PC-3 (cell line): ENCODE measurements at regions of chr10 and their contacts with region 1.

Region 1: DNA sequence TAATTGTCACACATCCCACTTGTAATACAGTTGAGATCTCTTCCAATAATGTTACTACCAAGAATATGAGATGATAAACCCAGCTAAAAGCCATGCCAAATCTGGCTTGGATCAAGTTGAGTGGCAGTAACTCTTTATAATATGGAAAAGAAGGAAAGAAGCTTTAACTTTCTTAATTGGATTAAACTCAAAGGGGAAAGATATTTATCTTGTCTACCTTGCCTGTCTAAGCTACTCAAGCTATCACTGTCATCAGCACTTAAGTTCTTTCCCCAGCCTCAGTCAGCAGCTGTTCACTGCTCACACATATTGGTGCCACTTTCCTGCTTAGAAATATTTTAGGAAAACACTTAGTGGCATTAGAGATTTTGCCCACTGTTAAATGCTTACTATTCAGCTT is 350.7 kb downstream of the IPMK start:
- DNase-seq: no peak
- ATAC-seq: no peak
- H3K4me3 ChIP-seq: no peak overlapping the region
- H3K27ac ChIP-seq: no peak overlapping the region
- H3K4me1 ChIP-seq: peaks cover 25% of the 10 kb centered on the region
- H3K27me3 ChIP-seq: no peaks in the 10 kb centered on the region
- CTCF ChIP-seq: no peak

Region 2: DNA sequence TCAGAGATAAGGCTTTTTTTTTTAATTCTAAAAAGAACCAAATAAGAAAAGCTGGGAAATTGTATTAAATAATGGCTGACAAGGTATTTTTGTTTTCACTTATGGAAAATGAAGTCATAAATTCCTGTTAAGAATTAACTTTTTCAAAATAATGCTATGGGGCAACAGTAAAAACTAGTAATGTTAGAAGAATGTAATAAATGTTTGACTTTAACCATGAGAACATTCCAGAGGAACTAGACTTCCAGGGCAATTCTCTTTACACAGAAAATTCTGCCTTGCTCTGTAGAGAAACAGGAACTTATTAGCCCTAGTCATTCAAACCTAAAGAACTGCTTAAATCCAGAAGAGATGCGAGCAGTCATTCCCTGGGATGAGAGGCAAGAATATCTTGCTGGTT is 220.4 kb before region 1 on chr10:
- CTCF ChIA-PET with region 1: no interaction called
- POLR2A ChIA-PET with region 1: no interaction called
- intact Hi-C with region 1: loop called (anchors 5 kb)
- DNase-seq: peak; percentile 94
- ATAC-seq: peak; percentile 96
- H3K4me3 ChIP-seq: no peak overlapping the region
- H3K27ac ChIP-seq: peak overlapping the region; percentile 63
- H3K4me1 ChIP-seq: peaks cover 35% of the 10 kb centered on the region
- H3K27me3 ChIP-seq: no peaks in the 10 kb centered on the region
- CTCF ChIP-seq: no peak

Region 3: DNA sequence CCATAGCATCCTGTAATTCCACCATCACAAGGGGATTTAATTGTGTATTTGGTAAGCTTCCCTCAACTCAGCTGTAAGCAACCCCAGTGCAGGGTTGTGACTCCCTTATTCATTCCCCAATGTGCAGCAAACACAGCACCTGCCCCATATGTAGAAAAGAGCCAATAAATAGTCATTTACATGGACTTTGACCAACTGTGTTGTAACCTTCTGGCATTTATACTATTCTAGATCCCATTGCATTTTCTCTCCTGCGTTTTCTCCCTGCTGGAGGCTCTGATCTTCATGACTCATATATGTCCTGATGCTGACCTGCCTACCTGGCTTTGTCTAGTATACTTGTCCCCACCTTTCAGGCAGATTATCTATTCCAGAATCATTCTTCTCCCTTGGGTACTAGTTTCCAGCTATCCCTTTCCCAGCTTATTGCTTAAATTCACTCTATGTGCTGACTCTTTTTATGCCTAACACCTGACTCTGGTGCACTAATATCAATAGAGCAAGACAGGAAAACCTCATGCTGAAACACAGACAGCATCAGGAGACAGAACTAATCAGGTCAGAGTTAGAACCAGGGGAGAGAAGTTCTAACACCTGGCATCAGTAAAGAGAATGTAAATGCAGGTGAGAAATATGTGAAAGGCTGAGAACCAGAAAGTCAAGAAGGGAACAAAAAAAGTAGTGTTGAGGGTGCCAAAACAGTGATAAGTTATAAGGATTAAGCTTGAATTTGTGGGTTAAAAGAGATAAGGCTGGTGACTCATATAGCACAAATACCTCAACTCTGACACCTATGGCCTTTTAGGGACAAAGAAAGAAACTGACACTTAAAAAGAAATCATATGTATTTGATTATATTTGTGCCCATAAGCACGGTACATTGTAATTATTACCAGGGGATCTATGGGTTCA is 52.0 kb before region 1 on chr10:
- CTCF ChIA-PET with region 1: no interaction called
- POLR2A ChIA-PET with region 1: no interaction called
- intact Hi-C with region 1: loop called (anchors 5 kb)
- DNase-seq: peak; percentile 77
- ATAC-seq: peak; percentile 48
- H3K4me3 ChIP-seq: no peak overlapping the region
- H3K27ac ChIP-seq: 0 out of 2 replicates have a peak overlapping the region, but pooled peaks have one; percentile 4
- H3K4me1 ChIP-seq: peaks cover 37% of the 10 kb centered on the region
- H3K27me3 ChIP-seq: no peaks in the 10 kb centered on the region
- CTCF ChIP-seq: no peak

Region 4: GRCh38 chr10:57891201-57892006 is 25.6 kb before region 1 on chr10:
- CTCF ChIA-PET with region 1: no interaction called
- POLR2A ChIA-PET with region 1: no interaction called
- intact Hi-C with region 1: no loop called
- DNase-seq: peak; percentile 16
- ATAC-seq: no peak
- H3K4me3 ChIP-seq: no peak overlapping the region
- H3K27ac ChIP-seq: no peak overlapping the region
- H3K4me1 ChIP-seq: no peaks in the 10 kb centered on the region
- H3K27me3 ChIP-seq: no peaks in the 10 kb centered on the region
- CTCF ChIP-seq: no peak

Region 5: DNA sequence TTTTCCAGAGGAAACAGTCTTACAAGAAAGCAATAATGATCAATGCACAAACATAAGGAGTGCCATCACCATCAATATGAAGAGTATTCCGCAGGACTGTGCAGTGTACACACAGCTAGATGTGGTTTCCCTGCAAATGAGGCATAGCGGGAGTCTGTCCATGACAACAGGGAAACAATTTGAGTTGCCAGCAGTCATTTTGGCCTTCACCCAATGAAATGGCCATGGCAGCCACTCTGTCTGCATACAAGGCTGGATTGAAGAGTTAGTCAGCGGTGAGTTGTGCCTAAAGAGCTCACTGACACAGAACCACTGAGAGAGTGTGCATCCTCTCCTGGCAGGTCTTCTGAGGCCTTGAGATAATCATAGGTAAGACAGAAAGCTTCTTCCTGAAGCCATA is 47.3 kb after region 1 on chr10:
- CTCF ChIA-PET with region 1: no interaction called
- POLR2A ChIA-PET with region 1: no interaction called
- intact Hi-C with region 1: loop called (anchors 1 kb)
- DNase-seq: peak; percentile 94
- ATAC-seq: peak; percentile 96
- H3K4me3 ChIP-seq: no peak overlapping the region
- H3K27ac ChIP-seq: 0 out of 2 replicates have a peak overlapping the region, but pooled peaks have one; percentile 1
- H3K4me1 ChIP-seq: peaks cover 19% of the 10 kb centered on the region
- H3K27me3 ChIP-seq: no peaks in the 10 kb centered on the region
- CTCF ChIP-seq: no peak